PC-3 (cell line): ENCODE measurements at regions of chr10 and their contacts with region 1.

Region 1: DNA sequence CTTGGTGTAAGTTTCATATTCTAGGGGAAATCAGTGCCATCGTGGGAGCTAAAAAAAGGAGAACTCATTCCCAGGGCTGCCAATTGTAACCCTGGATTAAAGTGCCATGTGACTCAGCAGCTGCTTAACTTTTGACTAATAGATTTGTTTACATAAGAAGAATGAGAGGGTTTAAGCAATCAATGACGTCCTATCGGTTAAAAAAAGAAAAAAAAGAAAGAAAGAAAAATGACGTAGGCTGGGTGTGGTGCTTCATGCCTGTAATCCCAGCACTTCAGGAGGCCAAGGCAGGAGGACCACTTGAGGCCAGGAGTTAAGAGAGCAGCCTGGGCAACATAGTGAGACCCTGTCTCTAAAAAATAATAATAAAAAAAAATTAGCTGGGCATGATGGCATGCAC is 116.2 kb upstream of the AFAP1L2 start:
- DNase-seq: peak; percentile 82
- ATAC-seq: peak; percentile 14; the same call in 1 of the 2 replicates
- H3K4me3 ChIP-seq: no peak overlapping the region
- H3K27ac ChIP-seq: peak overlapping the region; percentile 93
- H3K4me1 ChIP-seq: peaks cover 40% of the 10 kb centered on the region
- H3K27me3 ChIP-seq: no peaks in the 10 kb centered on the region
- CTCF ChIP-seq: no peak

Region 2: GRCh38 chr10:114544045-114544659 is 23.7 kb after region 1 on chr10:
- CTCF ChIA-PET with region 1: interaction called, 3 read pairs
- POLR2A ChIA-PET with region 1: no interaction called
- intact Hi-C with region 1: loop called (anchors 2 kb)
- DNase-seq: peak; percentile 82
- ATAC-seq: peak; percentile 85
- H3K4me3 ChIP-seq: no peak overlapping the region
- H3K27ac ChIP-seq: peak overlapping the region; percentile 85
- H3K4me1 ChIP-seq: peaks cover 31% of the 10 kb centered on the region
- H3K27me3 ChIP-seq: no peaks in the 10 kb centered on the region
- CTCF ChIP-seq: no peak